ENCODE measurements at regions of chr1 and their contacts with region 1.

Region 1: GRCh38 chr1:12019858-12020509 is 686 bp downstream of the MIIP start:
- DNase-seq: no peak
- ATAC-seq: no peak
- H3K4me3 ChIP-seq: peak overlapping the region; percentile 77
- H3K4me3 Mint-ChIP-seq: peak overlapping the region; percentile 82 to 99 (median 92)
- H3K27ac ChIP-seq: peak overlapping the region; percentile 73
- H3K27ac Mint-ChIP-seq: peak overlapping the region in 8 of 9 donors; percentile 43 to 97 (median 89)
- H3K4me1 ChIP-seq: no peaks in the 10 kb centered on the region
- H3K4me1 Mint-ChIP-seq: peaks cover 0 to 35% (median 17%) of the 10 kb centered on the region in 7 donors
- H3K27me3 ChIP-seq: no peaks in the 10 kb centered on the region
- H3K27me3 Mint-ChIP-seq: peaks cover 0 to 3% (median 0%) of the 10 kb centered on the region in 5 donors

Region 2: GRCh38 chr1:10398734-10399623 is 1621.0 kb before region 1 on chr1 and contains the start of gene PGD:
- CTCF ChIA-PET with region 1: no interaction called
- POLR2A ChIA-PET with region 1: no interaction called
- intact Hi-C with region 1: no loop called
- DNase-seq: peak; percentile 87 to 98 (median 94)
- ATAC-seq: peak; percentile 99
- H3K4me3 ChIP-seq: peak within 1 kb of the TSS; percentile 95
- H3K4me3 Mint-ChIP-seq: peak within 1 kb of the TSS; percentile 87 to 97 (median 96)
- H3K27ac ChIP-seq: peak within 1 kb of the TSS; percentile 86
- H3K27ac Mint-ChIP-seq: peak within 1 kb of the TSS; percentile 63 to 94 (median 82)
- H3K4me1 ChIP-seq: peaks cover 4 to 7% of the 10 kb centered on the region in 2 donors
- H3K4me1 Mint-ChIP-seq: peaks cover 10 to 30% (median 25%) of the 10 kb centered on the region in 7 donors
- H3K27me3 ChIP-seq: no peaks in the 10 kb centered on the region
- H3K27me3 Mint-ChIP-seq: no peaks in the 10 kb centered on the region
- total RNA-seq, gene PGD: 42.0 to 110 (median 48.5) TPM

Region 3: GRCh38 chr1:11838349-11839272 is 181.4 kb before region 1 on chr1:
- CTCF ChIA-PET with region 1: no interaction called
- POLR2A ChIA-PET with region 1: no interaction called
- intact Hi-C with region 1: loop called in 1 of 2 experiments (anchors 10 kb)
- DNase-seq: peak; percentile 59 to 79 (median 73)
- ATAC-seq: peak; percentile 93
- H3K4me3 ChIP-seq: no peak overlapping the region
- H3K4me3 Mint-ChIP-seq: no peak overlapping the region
- H3K27ac ChIP-seq: no peak overlapping the region
- H3K27ac Mint-ChIP-seq: peak overlapping the region in 1 of 9 donors; percentile 29
- H3K4me1 ChIP-seq: no peaks in the 10 kb centered on the region
- H3K4me1 Mint-ChIP-seq: peaks cover 0 to 8% (median 4%) of the 10 kb centered on the region in 7 donors
- H3K27me3 ChIP-seq: no peaks in the 10 kb centered on the region
- H3K27me3 Mint-ChIP-seq: no peaks in the 10 kb centered on the region

Region 4: GRCh38 chr1:11934302-11935056 is 85.5 kb before region 1 on chr1 and contains the start of gene PLOD1:
- CTCF ChIA-PET with region 1: no interaction called
- POLR2A ChIA-PET with region 1: no interaction called
- intact Hi-C with region 1: loop called (anchors 1 kb)
- DNase-seq: peak; percentile 50 to 83 (median 67)
- ATAC-seq: peak; percentile 100
- H3K4me3 ChIP-seq: peak within 1 kb of the TSS; percentile 68
- H3K4me3 Mint-ChIP-seq: peak within 1 kb of the TSS; percentile 77 to 87 (median 82)
- H3K27ac ChIP-seq: peak within 1 kb of the TSS; percentile 54
- H3K27ac Mint-ChIP-seq: peak within 1 kb of the TSS in 4 of 9 donors; percentile 45 to 59 (median 52)
- H3K4me1 ChIP-seq: peaks cover 3 to 7% of the 10 kb centered on the region in 2 donors
- H3K4me1 Mint-ChIP-seq: peaks cover 0 to 18% (median 0%) of the 10 kb centered on the region in 7 donors
- H3K27me3 ChIP-seq: no peaks in the 10 kb centered on the region
- H3K27me3 Mint-ChIP-seq: no peaks in the 10 kb centered on the region
- total RNA-seq, gene PLOD1: 3.6 to 24.2 (median 4.8) TPM

Region 5: GRCh38 chr1:11979851-11980675 is 39.9 kb before region 1 on chr1 and contains the start of gene MFN2:
- CTCF ChIA-PET with region 1: interaction called, 4 read pairs
- POLR2A ChIA-PET with region 1: interaction called, 8 read pairs
- intact Hi-C with region 1: loop called (anchors 1 kb)
- DNase-seq: peak; percentile 89 to 97 (median 94)
- ATAC-seq: peak; percentile 94
- H3K4me3 ChIP-seq: peak within 1 kb of the TSS; percentile 88
- H3K4me3 Mint-ChIP-seq: peak within 1 kb of the TSS; percentile 86 to 99 (median 92)
- H3K27ac ChIP-seq: peak within 1 kb of the TSS; percentile 98
- H3K27ac Mint-ChIP-seq: peak within 1 kb of the TSS; percentile 85 to 98 (median 94)
- H3K4me1 ChIP-seq: peaks cover 9 to 22% of the 10 kb centered on the region in 2 donors
- H3K4me1 Mint-ChIP-seq: peaks cover 33 to 46% (median 41%) of the 10 kb centered on the region in 7 donors
- H3K27me3 ChIP-seq: no peaks in the 10 kb centered on the region
- H3K27me3 Mint-ChIP-seq: no peaks in the 10 kb centered on the region
- total RNA-seq, gene MFN2: 40.2 to 58.6 (median 44.8) TPM

Region 6: GRCh38 chr1:12047120-12047876 is 27.3 kb after region 1 on chr1:
- CTCF ChIA-PET with region 1: no interaction called
- POLR2A ChIA-PET with region 1: no interaction called
- intact Hi-C with region 1: loop called in 1 of 2 experiments (anchors 2 kb)
- DNase-seq: peak in 4 of 9 donors; percentile 6 to 76 (median 20)
- ATAC-seq: peak; percentile 60
- H3K4me3 ChIP-seq: peak overlapping the region; percentile 39
- H3K4me3 Mint-ChIP-seq: no peak overlapping the region
- H3K27ac ChIP-seq: no peak overlapping the region
- H3K27ac Mint-ChIP-seq: no peak overlapping the region
- H3K4me1 ChIP-seq: peaks cover 9 to 18% of the 10 kb centered on the region in 2 donors
- H3K4me1 Mint-ChIP-seq: peaks cover 0 to 19% (median 0%) of the 10 kb centered on the region in 7 donors
- H3K27me3 ChIP-seq: no peaks in the 10 kb centered on the region
- H3K27me3 Mint-ChIP-seq: peaks cover 0 to 2% (median 0%) of the 10 kb centered on the region in 5 donors

Region 7: GRCh38 chr1:12087797-12088314 is 67.9 kb after region 1 on chr1:
- CTCF ChIA-PET with region 1: no interaction called
- POLR2A ChIA-PET with region 1: no interaction called
- intact Hi-C with region 1: loop called (anchors 2 kb)
- DNase-seq: peak in 5 of 9 donors; percentile 10 to 69 (median 25)
- ATAC-seq: peak; percentile 72
- H3K4me3 ChIP-seq: peak overlapping the region; percentile 52
- H3K4me3 Mint-ChIP-seq: peak overlapping the region; percentile 46 to 78 (median 70)
- H3K27ac ChIP-seq: peak overlapping the region; percentile 53
- H3K27ac Mint-ChIP-seq: peak overlapping the region; percentile 52 to 95 (median 89)
- H3K4me1 ChIP-seq: peaks cover 33% of the 10 kb centered on the region in 2 donors
- H3K4me1 Mint-ChIP-seq: peaks cover 35 to 57% (median 49%) of the 10 kb centered on the region in 7 donors
- H3K27me3 ChIP-seq: no peaks in the 10 kb centered on the region
- H3K27me3 Mint-ChIP-seq: no peaks in the 10 kb centered on the region

Region 8: GRCh38 chr1:12204140-12204539 is 184.2 kb after region 1 on chr1:
- CTCF ChIA-PET with region 1: no interaction called
- POLR2A ChIA-PET with region 1: no interaction called
- intact Hi-C with region 1: no loop called
- DNase-seq: peak in 3 of 9 donors; percentile 23 to 60 (median 25)
- ATAC-seq: no peak
- H3K4me3 ChIP-seq: no peak overlapping the region
- H3K4me3 Mint-ChIP-seq: peak overlapping the region in 6 of 10 donors; percentile 21 to 53 (median 44)
- H3K27ac ChIP-seq: peak overlapping the region; percentile 38
- H3K27ac Mint-ChIP-seq: peak overlapping the region in 8 of 9 donors; percentile 63 to 83 (median 80)
- H3K4me1 ChIP-seq: peaks cover 17 to 48% of the 10 kb centered on the region in 2 donors
- H3K4me1 Mint-ChIP-seq: peaks cover 9 to 51% (median 34%) of the 10 kb centered on the region in 7 donors
- H3K27me3 ChIP-seq: no peaks in the 10 kb centered on the region
- H3K27me3 Mint-ChIP-seq: no peaks in the 10 kb centered on the region